PC-3 (cell line): ENCODE measurements at regions of chrX and their contacts with region 1.

Region 1: DNA sequence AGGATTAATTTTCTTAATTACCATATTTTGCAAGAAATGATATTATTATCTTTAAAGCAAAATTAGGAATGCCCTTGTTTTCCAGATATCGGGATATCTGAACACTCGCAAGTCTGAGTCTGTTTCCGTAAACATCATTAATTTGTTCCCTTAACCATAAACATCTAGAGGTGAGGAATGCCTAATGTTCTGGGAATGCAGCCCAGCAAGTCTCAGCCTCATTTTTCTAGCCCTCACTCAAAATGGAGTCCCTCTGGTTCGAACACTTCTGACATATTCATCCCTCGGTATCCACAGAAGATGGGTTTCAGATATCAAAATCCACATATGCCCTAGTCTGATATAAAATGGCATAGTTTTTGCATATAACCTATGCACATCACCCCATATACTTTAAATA is 152.4 kb downstream of the NAP1L3 start:
- DNase-seq: no peak
- ATAC-seq: no peak
- H3K4me3 ChIP-seq: no peak overlapping the region
- H3K27ac ChIP-seq: no peak overlapping the region
- H3K4me1 ChIP-seq: no peaks in the 10 kb centered on the region
- H3K27me3 ChIP-seq: no peaks in the 10 kb centered on the region
- CTCF ChIP-seq: no peak

Region 2: GRCh38 chrX:93422693-93423092 is 98.3 kb before region 1 on chrX:
- CTCF ChIA-PET with region 1: no interaction called
- POLR2A ChIA-PET with region 1: no interaction called
- intact Hi-C with region 1: loop called (anchors 5 kb)
- DNase-seq: peak; percentile 58
- ATAC-seq: peak; percentile 56
- H3K4me3 ChIP-seq: no peak overlapping the region
- H3K27ac ChIP-seq: no peak overlapping the region
- H3K4me1 ChIP-seq: no peaks in the 10 kb centered on the region
- H3K27me3 ChIP-seq: no peaks in the 10 kb centered on the region
- CTCF ChIP-seq: peak; percentile 65

Region 3: GRCh38 chrX:93439464-93439863 is 81.5 kb before region 1 on chrX:
- CTCF ChIA-PET with region 1: no interaction called
- POLR2A ChIA-PET with region 1: no interaction called
- intact Hi-C with region 1: loop called (anchors 5 kb)
- DNase-seq: no peak
- ATAC-seq: no peak
- H3K4me3 ChIP-seq: no peak overlapping the region
- H3K27ac ChIP-seq: no peak overlapping the region
- H3K4me1 ChIP-seq: no peaks in the 10 kb centered on the region
- H3K27me3 ChIP-seq: no peaks in the 10 kb centered on the region
- CTCF ChIP-seq: no peak

Region 4: GRCh38 chrX:93649381-93649780 is 128.4 kb after region 1 on chrX:
- CTCF ChIA-PET with region 1: no interaction called
- POLR2A ChIA-PET with region 1: no interaction called
- intact Hi-C with region 1: no loop called
- DNase-seq: no peak
- ATAC-seq: no peak
- H3K4me3 ChIP-seq: no peak overlapping the region
- H3K27ac ChIP-seq: no peak overlapping the region
- H3K4me1 ChIP-seq: no peaks in the 10 kb centered on the region
- H3K27me3 ChIP-seq: no peaks in the 10 kb centered on the region
- CTCF ChIP-seq: no peak